Activated CD4-positive, alpha-beta memory T cell treated with anti-CD3 and anti-CD28 coated beads for 36 hours (primary cell): ENCODE measurements at regions of chr11 and their contacts with region 1.

Region 1: DNA sequence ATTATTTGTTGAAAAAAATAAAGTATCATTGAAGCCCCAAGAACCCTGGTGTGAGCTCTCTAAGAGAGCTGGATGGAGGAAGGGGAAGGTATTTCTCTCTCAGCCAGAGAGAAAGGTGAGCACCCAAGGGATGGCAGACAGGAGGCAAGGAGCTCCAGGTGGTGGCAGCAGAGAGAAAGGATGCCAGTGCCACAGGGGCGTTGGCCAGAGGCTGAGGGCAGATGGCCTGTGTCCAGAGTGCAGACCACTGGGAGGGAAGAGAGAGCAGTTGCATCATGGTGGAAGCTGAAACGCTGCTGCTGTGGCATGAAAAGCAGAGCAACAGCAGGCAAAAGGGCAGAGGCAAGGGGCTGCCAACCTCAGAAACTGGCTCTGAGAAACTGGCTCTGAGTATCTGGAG is 8.5 kb downstream of the SPON1 start:
- DNase-seq: peak; percentile 33
- H3K4me3 Mint-ChIP-seq: no peak overlapping the region
- H3K27ac Mint-ChIP-seq: no peak overlapping the region
- H3K4me1 Mint-ChIP-seq: peaks cover 18% of the 10 kb centered on the region
- H3K27me3 Mint-ChIP-seq: peaks cover under 1% of the 10 kb centered on the region

Region 2: GRCh38 chr11:13955971-13956421 is 15.0 kb before region 1 on chr11:
- CTCF ChIA-PET with region 1: interaction called, 45 read pairs
- POLR2A ChIA-PET with region 1: no interaction called
- intact Hi-C with region 1: no loop called
- DNase-seq: peak; percentile 54
- H3K4me3 Mint-ChIP-seq: no peak overlapping the region
- H3K27ac Mint-ChIP-seq: no peak overlapping the region
- H3K4me1 Mint-ChIP-seq: no peaks in the 10 kb centered on the region
- H3K27me3 Mint-ChIP-seq: peaks cover 3% of the 10 kb centered on the region

Region 3: DNA sequence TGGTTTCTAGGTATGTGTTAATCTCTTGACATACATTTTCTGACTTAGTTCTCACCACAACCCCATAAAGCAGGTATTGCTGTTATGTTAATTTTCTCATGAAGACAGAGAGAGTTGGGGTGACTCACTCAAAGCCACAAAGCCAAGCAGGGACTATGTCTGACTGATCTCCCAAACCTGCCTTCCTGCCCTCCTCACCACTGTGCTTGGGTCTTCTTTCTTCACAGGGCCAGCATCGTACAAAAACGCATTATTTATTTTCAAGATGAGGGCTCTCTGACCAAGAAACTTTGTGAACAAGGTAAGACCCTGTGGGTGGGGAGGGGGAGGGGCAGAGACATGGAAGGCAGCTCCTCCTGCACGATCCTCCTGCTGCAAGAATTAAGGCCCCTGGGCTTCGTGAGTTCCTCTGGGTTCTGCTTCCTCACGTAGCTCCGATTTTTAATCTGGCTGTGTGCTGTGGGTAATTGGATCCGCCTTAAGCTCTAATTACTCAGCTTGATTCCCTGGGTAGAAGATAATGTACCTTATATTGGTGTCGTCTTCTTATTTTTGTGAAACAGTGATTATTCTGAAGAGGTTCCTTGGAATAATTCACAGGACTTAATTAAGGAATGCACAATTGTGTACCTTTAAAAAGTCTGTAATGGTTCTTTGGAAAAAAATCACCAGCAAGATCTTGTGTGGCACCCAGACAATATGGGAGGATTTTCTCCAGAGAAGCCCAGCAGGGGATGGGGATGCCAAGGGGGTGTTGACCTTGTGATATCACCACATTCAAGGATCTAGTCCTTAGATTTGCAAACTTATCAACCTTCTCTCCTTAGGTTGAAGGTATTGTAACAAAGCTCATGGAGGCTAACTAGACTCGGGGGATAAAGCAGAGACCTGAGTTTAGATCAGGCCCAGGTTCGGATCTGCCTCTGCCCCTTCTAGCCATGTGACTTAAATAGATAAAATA is 104.4 kb after region 1 on chr11:
- CTCF ChIA-PET with region 1: no interaction called
- POLR2A ChIA-PET with region 1: no interaction called
- intact Hi-C with region 1: loop called (anchors 2 kb)
- DNase-seq: peak; percentile 79
- H3K4me3 Mint-ChIP-seq: peak overlapping the region; percentile 2
- H3K27ac Mint-ChIP-seq: peak overlapping the region; percentile 34
- H3K4me1 Mint-ChIP-seq: peaks cover 46% of the 10 kb centered on the region
- H3K27me3 Mint-ChIP-seq: no peaks in the 10 kb centered on the region